ENCODE measurements at regions of chr22 and their contacts with region 1.

Region 1: GRCh38 chr22:36065775-36066559 is 37.3 kb upstream of the RBFOX2 start:
- DNase-seq: peak; percentile 87
- H3K4me3 ChIP-seq: peak overlapping the region; percentile 65
- H3K27ac ChIP-seq: peak overlapping the region; percentile 78
- H3K27me3 ChIP-seq: no peaks in the 10 kb centered on the region
- CTCF ChIP-seq: peak; percentile 96

Region 2: GRCh38 chr22:35879351-35879750 is 186.6 kb before region 1 on chr22:
- CTCF ChIA-PET with region 1: interaction called, 18 read pairs
- POLR2A ChIA-PET with region 1: no interaction called
- DNase-seq: no peak
- H3K4me3 ChIP-seq: no peak overlapping the region
- H3K27ac ChIP-seq: no peak overlapping the region
- H3K27me3 ChIP-seq: no peaks in the 10 kb centered on the region
- CTCF ChIP-seq: no peak

Region 3: GRCh38 chr22:35930933-35931332 is 135.0 kb before region 1 on chr22:
- CTCF ChIA-PET with region 1: interaction called, 82 read pairs
- POLR2A ChIA-PET with region 1: interaction called, 3 read pairs
- DNase-seq: peak; percentile 43
- H3K4me3 ChIP-seq: no peak overlapping the region
- H3K27ac ChIP-seq: no peak overlapping the region
- H3K27me3 ChIP-seq: no peaks in the 10 kb centered on the region
- CTCF ChIP-seq: peak; percentile 75

Region 4: GRCh38 chr22:35984183-35985175 is 81.5 kb before region 1 on chr22:
- CTCF ChIA-PET with region 1: interaction called, 13 read pairs
- POLR2A ChIA-PET with region 1: no interaction called
- DNase-seq: no peak
- H3K4me3 ChIP-seq: no peak overlapping the region
- H3K27ac ChIP-seq: no peak overlapping the region
- H3K27me3 ChIP-seq: no peaks in the 10 kb centered on the region
- CTCF ChIP-seq: no peak

Region 5: GRCh38 chr22:36028646-36029405 is 37.1 kb before region 1 on chr22 and contains the start of gene RBFOX2:
- CTCF ChIA-PET with region 1: interaction called, 57 read pairs
- POLR2A ChIA-PET with region 1: interaction called, 30 read pairs
- DNase-seq: peak; percentile 94
- H3K4me3 ChIP-seq: peak within 1 kb of the TSS; percentile 91
- H3K27ac ChIP-seq: peak within 1 kb of the TSS; percentile 54
- H3K27me3 ChIP-seq: no peaks in the 10 kb centered on the region
- CTCF ChIP-seq: no peak
- polyA plus RNA-seq, gene RBFOX2: 253 and 288 TPM in 2 replicates

Region 6: GRCh38 chr22:36123673-36124630 is 58.0 kb after region 1 on chr22:
- CTCF ChIA-PET with region 1: interaction called, 36 read pairs
- POLR2A ChIA-PET with region 1: no interaction called
- DNase-seq: peak; percentile 87
- H3K4me3 ChIP-seq: 0 out of 2 replicates have a peak overlapping the region, but pooled peaks have one; percentile 21
- H3K27ac ChIP-seq: peak overlapping the region; percentile 57
- H3K27me3 ChIP-seq: peaks cover 11% of the 10 kb centered on the region
- CTCF ChIP-seq: peak; percentile 98

Region 7: GRCh38 chr22:36211237-36211861 is 145.4 kb after region 1 on chr22:
- CTCF ChIA-PET with region 1: no interaction called
- POLR2A ChIA-PET with region 1: no interaction called
- DNase-seq: no peak
- H3K4me3 ChIP-seq: no peak overlapping the region
- H3K27ac ChIP-seq: no peak overlapping the region
- H3K27me3 ChIP-seq: peaks cover 44% of the 10 kb centered on the region
- CTCF ChIP-seq: no peak